Body of pancreas (tissue), 4 donors: ENCODE measurements at regions of chr4 and their contacts with region 1.

Region 1: GRCh38 chr4:185761352-185762235 is 50.4 kb downstream of the SORBS2 start:
- DNase-seq: no peak
- ATAC-seq: peak; percentile 49
- H3K4me3 ChIP-seq: no peak overlapping the region
- H3K27ac ChIP-seq: peak overlapping the region in 2 of 4 donors; percentile 20 to 26
- H3K4me1 ChIP-seq: peaks cover 42% of the 10 kb centered on the region
- H3K27me3 ChIP-seq: no peaks in the 10 kb centered on the region
- CTCF ChIP-seq: no peak
- POLR2A ChIP-seq: no peak

Region 2: DNA sequence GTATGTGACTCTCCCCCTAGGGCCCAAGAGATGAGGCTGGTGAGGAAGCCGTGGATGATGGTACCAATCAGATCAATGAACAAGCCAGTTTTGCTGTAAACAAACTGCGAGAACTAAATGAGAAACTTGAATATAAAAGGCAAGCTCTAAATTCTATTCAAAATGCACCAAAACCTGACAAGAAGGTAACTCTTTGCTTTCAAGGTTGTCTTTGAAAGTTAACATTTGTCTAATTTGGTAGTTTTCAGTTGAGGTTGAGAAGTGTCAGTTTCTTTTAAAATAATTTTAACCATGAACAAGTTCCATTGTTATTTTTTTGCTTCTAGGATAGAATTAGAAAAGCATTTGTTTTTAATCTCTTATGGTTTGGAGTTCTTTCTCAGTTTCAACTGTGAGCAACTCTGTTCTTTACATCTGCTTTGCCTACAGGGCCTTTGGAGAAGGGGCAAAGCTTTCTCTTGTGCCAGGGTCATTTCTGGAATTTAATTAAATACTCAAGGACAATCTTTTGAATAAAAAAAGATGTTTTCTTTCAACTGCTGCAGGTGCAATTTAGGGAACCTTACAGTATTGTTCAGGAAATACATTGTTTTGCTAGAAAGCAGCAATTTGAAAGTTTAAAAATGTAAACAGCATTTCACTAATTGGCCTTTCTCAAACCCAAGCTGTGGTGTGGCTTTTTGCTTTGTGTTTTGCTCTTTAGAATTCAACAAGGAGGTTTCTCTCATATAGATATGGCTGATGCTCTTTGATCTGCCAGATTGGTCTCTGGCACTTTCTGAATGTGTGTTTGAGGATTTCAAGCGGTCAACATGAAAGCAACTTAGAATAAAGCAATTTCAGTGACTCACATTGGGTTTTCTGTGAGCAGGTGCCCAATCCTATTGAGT is 428.8 kb before region 1 on chr4:
- intact Hi-C with region 1: no loop called
- DNase-seq: no peak
- ATAC-seq: no peak
- H3K4me3 ChIP-seq: no peak overlapping the region
- H3K27ac ChIP-seq: no peak overlapping the region
- H3K4me1 ChIP-seq: no peaks in the 10 kb centered on the region
- H3K27me3 ChIP-seq: no peaks in the 10 kb centered on the region
- CTCF ChIP-seq: no peak
- POLR2A ChIP-seq: no peak

Region 3: GRCh38 chr4:185625503-185625902 is 136.1 kb before region 1 on chr4:
- intact Hi-C with region 1: no loop called
- DNase-seq: no peak
- ATAC-seq: no peak
- H3K4me3 ChIP-seq: no peak overlapping the region
- H3K27ac ChIP-seq: no peak overlapping the region
- H3K4me1 ChIP-seq: peaks cover 3% of the 10 kb centered on the region
- H3K27me3 ChIP-seq: no peaks in the 10 kb centered on the region
- CTCF ChIP-seq: no peak
- POLR2A ChIP-seq: no peak

Region 4: DNA sequence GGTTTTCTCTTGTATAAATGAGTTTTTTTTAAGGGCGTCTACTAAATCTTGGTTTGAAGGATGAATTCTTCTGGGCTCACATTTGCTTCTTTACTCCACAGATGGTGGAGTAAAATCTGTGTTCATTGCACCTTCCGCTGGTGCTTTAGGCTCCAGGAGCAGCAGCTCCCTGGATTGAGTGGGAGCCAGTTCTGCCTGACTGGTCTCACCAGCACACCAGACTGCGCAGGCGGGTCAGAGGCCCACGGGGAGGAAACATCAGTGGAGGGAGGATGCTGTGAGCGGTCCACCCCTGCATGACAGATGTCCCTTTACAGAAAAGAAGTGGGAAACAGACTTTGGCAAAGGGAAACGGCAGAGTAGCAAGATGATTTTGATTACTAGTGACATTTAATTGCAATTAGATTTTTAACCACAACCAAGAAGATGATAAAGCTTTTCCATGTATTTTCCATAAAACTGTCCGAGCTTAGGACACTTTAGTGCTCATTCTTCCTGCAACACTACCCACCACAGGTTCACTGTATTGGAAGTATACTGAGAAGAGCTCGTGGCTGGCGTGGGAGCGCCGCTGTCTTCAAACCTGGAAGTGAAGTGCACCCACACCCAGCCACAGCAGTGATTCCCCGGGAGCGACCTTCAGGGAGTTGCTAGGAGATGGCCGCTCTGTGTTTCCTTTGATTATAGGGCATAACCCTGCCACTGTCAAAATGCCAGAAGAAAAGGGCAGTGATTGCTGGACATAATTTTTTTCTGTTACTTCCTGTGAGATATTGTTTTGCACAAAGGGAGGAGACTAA is 44.8 kb before region 1 on chr4:
- intact Hi-C with region 1: loop called (anchors 10 kb)
- DNase-seq: peak in 3 of 4 donors; percentile 41 to 50 (median 43)
- ATAC-seq: peak; percentile 12
- H3K4me3 ChIP-seq: no peak overlapping the region
- H3K27ac ChIP-seq: peak overlapping the region in 3 of 4 donors; percentile 44 to 80 (median 73)
- H3K4me1 ChIP-seq: peaks cover 93% of the 10 kb centered on the region
- H3K27me3 ChIP-seq: no peaks in the 10 kb centered on the region
- CTCF ChIP-seq: no peak
- POLR2A ChIP-seq: no peak

Region 5: DNA sequence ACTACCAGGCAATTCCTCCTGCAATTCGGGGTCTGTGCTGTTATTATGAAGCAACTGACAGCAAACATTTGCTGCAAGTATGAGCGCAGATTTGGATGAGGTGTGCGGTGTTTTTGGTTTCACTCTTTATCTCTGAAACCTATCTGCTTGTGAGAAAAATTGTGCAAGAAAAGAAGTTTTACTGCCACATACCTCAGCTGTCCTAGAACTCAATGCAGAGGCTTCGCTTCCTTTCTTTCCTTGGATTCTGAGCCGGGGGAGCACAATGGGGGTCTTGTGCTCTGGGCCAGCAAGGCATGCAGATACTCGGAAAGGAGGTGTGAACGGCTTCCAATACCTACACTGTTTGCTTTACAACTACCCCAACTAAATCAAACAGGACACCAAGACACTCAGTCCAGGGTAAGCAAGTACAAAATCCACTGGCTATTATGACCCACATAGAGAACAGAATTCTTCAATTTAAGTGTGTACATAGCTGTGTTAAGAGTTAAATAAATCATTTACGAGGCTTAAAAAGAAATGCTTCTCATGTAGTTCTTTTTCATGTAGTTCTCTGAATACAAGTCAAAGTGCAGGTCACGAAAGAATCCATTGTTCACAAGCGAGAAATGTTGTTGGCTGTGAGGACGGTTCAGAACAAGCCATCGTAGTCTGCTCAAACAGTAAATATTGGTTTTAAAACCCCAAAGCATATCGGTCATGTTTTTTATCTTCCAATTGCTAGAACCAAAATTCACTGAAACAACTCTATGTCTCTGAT is 49.3 kb after region 1 on chr4:
- intact Hi-C with region 1: no loop called
- DNase-seq: no peak
- ATAC-seq: peak; percentile 16
- H3K4me3 ChIP-seq: peak overlapping the region; percentile 54 to 57
- H3K27ac ChIP-seq: peak overlapping the region; percentile 78 to 92 (median 88)
- H3K4me1 ChIP-seq: peaks cover 21% of the 10 kb centered on the region
- H3K27me3 ChIP-seq: no peaks in the 10 kb centered on the region
- CTCF ChIP-seq: no peak
- POLR2A ChIP-seq: peak in 2 of 3 donors; percentile 19 to 47